Left ventricle myocardium superior (tissue), 1 donor: ENCODE measurements at regions of chr10 and their contacts with region 1.

Region 1: GRCh38 chr10:63145782-63146181 is 12.7 kb downstream of the NRBF2 start:
- DNase-seq: no peak
- ATAC-seq: peak; percentile 34

Region 2: GRCh38 chr10:62577666-62578291 is 568.0 kb before region 1 on chr10:
- intact Hi-C with region 1: no loop called
- DNase-seq: no peak
- ATAC-seq: no peak

Region 3: DNA sequence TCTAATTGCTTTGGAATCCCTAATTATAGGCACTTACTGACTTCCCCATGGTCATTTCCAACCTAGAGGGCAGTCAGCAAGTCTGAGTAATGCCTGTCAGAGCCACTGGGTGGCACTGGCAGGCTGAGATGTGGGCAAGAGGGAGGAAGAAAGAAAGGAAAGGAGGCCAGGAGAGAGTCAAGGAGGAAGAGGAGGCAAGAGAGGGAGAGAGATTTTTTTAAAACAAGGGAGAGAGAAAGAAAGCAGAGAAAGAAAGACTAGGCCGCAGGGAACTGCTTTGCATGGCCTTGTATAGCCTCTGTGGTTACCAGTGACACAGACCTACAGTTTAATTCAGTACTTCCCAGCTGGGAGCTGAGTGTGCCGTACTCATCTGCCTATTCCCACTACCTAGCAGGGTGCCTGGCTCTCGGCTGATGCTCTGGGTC is 551.7 kb before region 1 on chr10:
- intact Hi-C with region 1: loop called (anchors 5 kb)
- DNase-seq: peak; percentile 76
- ATAC-seq: peak; percentile 88

Region 4: GRCh38 chr10:63054889-63055611 is 90.7 kb before region 1 on chr10:
- intact Hi-C with region 1: no loop called
- DNase-seq: no peak
- ATAC-seq: no peak